A549 (cell line): ENCODE measurements at regions of chr19 and their contacts with region 1.

Region 1: DNA sequence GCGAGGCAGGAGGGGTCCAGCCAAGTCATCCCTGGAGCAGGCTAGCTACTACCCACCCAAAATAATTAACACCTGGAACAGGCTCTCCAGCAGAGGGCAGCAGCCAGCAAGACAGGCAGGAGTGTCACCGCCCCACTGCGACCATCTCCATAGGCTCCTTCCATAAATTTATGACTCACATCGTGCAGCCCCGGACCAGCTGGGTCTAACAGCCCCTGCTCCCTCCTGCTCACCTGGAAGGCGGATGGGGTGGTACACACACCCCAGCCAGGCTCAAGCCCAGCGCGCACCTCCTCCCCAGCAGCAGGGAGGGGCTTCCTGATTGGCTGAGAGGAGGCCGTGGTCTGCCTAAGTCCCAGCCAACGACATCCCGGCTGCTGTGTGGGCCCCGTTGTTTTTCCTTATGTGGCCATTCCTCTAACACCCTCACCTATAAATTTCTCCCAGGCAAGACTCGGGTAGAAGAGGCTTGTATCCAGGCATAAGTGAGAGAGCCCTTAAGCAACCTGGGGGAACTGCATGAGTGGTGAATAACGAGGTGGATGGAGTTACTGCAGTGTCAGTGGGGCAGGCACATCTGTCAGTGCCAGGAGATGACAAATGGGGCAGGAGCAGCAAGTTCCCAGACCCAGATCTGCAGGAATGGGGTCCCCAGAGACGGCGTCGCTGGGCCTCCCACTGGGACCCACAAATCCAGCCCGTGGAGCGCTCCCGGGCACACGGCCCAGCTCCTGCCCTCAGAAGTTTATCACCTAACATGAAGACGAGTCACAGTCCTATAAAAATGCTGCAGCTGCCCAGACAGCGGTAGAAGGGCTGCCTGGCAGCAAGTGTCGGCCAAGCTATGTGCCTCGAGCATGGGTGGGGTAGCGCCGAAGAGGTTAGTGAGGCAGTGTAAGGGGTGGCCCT is 43.1 kb downstream of the CEBPG start:
- DNase-seq: peak; percentile 84 to 99
- ATAC-seq: peak; percentile 64 to 92
- H3K4me3 ChIP-seq: no peak overlapping the region
- H3K27ac ChIP-seq: no peak overlapping the region
- H3K4me1 ChIP-seq: no peaks in the 10 kb centered on the region
- CTCF ChIP-seq: peak; percentile 98
- EP300 ChIP-seq: no peak
- POLR2A ChIP-seq: no peak
- RAD21 ChIP-seq: peak; percentile 85 to 91

Region 2: GRCh38 chr19:33193865-33194362 is 222.6 kb before region 1 on chr19 and contains the start of gene LRP3:
- CTCF ChIA-PET with region 1: interaction called, 10 read pairs
- POLR2A ChIA-PET with region 1: no interaction called
- DNase-seq: peak in 1 of 2 experiments; percentile 55
- ATAC-seq: peak; percentile 59 to 64
- H3K4me3 ChIP-seq: peak within 1 kb of the TSS; percentile 69
- H3K27ac ChIP-seq: peak within 1 kb of the TSS; percentile 71 to 91
- H3K4me1 ChIP-seq: peaks cover 10% of the 10 kb centered on the region; the same call in 2 of the 3 replicates
- CTCF ChIP-seq: no peak
- EP300 ChIP-seq: no peak
- POLR2A ChIP-seq: peak; percentile 36; the same call in 1 of the 2 replicates
- RAD21 ChIP-seq: no peak
- polyA plus RNA-seq, gene LRP3: 10.9 and 16.1 TPM in 2 replicates

Region 3: DNA sequence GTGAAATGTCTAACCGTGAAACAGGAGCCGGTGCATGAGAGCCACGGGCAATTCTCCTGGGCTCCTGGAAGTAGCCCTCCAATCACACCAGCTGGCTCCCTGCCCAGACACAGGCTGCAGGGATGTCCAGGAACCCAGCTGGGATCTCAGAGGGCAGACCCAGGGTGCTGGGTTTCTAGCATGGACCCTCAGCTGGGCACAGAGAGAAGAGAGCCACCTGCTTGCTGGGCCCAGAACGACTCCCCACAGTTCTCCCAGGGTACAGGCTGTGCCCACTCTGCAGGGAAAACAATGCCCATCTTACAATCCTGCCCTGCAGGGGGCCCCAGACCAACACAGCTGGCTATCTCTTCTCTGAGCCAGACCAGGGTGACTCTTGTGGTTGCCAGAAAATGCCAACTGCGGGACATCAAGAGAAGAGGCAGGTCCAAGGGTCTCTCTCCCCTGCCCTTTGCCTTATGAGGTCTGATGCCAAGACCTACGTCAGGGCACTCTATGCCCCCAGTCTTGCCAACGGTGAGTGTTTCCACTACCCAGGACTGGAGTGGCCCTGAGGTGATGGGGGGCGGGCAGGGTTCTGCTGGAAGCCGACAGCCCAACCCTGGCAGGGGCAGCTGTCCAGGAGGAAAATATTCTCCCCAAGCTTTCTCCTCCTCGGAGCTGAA is 21.6 kb after region 1 on chr19:
- CTCF ChIA-PET with region 1: interaction called, 253 read pairs
- POLR2A ChIA-PET with region 1: no interaction called
- DNase-seq: peak in 1 of 2 experiments; percentile 48
- ATAC-seq: peak; percentile 27 to 72; a peak in 4 of 6 replicates
- H3K4me3 ChIP-seq: no peak overlapping the region
- H3K27ac ChIP-seq: no peak overlapping the region
- H3K4me1 ChIP-seq: no peaks in the 10 kb centered on the region
- CTCF ChIP-seq: no peak
- EP300 ChIP-seq: no peak
- POLR2A ChIP-seq: no peak
- RAD21 ChIP-seq: peak in 1 of 2 experiments; percentile 37; a peak in 3 of 5 replicates

Region 4: GRCh38 chr19:33447336-33448158 is 31.0 kb after region 1 on chr19:
- CTCF ChIA-PET with region 1: interaction called, 30 read pairs
- POLR2A ChIA-PET with region 1: no interaction called
- DNase-seq: no peak
- ATAC-seq: peak in 1 of 2 experiments; percentile 17; a peak in 1 of 6 replicates
- H3K4me3 ChIP-seq: no peak overlapping the region
- H3K27ac ChIP-seq: no peak overlapping the region
- H3K4me1 ChIP-seq: no peaks in the 10 kb centered on the region
- CTCF ChIP-seq: no peak
- EP300 ChIP-seq: no peak
- POLR2A ChIP-seq: no peak
- RAD21 ChIP-seq: no peak

Region 5: GRCh38 chr19:33758541-33759013 is 342.0 kb after region 1 on chr19:
- CTCF ChIA-PET with region 1: interaction called, 455 read pairs
- POLR2A ChIA-PET with region 1: no interaction called
- DNase-seq: peak in 1 of 2 experiments; percentile 57
- ATAC-seq: peak; percentile 1 to 42; a peak in 3 of 6 replicates
- H3K4me3 ChIP-seq: no peak overlapping the region
- H3K27ac ChIP-seq: no peak overlapping the region
- H3K4me1 ChIP-seq: peaks cover 4% of the 10 kb centered on the region; the same call in 1 of the 3 replicates
- CTCF ChIP-seq: no peak
- EP300 ChIP-seq: no peak
- POLR2A ChIP-seq: no peak
- RAD21 ChIP-seq: no peak